ENCODE measurements at regions of chr11 and their contacts with region 1.

Region 1: GRCh38 chr11:75445315-75445953 is 12.4 kb upstream of the KLHL35 start:
- DNase-seq: peak; percentile 76
- H3K4me3 ChIP-seq: no peak overlapping the region
- H3K27ac ChIP-seq: no peak overlapping the region
- H3K4me1 ChIP-seq: no peaks in the 10 kb centered on the region
- H3K27me3 ChIP-seq: no peaks in the 10 kb centered on the region
- CTCF ChIP-seq: peak; percentile 97

Region 2: DNA sequence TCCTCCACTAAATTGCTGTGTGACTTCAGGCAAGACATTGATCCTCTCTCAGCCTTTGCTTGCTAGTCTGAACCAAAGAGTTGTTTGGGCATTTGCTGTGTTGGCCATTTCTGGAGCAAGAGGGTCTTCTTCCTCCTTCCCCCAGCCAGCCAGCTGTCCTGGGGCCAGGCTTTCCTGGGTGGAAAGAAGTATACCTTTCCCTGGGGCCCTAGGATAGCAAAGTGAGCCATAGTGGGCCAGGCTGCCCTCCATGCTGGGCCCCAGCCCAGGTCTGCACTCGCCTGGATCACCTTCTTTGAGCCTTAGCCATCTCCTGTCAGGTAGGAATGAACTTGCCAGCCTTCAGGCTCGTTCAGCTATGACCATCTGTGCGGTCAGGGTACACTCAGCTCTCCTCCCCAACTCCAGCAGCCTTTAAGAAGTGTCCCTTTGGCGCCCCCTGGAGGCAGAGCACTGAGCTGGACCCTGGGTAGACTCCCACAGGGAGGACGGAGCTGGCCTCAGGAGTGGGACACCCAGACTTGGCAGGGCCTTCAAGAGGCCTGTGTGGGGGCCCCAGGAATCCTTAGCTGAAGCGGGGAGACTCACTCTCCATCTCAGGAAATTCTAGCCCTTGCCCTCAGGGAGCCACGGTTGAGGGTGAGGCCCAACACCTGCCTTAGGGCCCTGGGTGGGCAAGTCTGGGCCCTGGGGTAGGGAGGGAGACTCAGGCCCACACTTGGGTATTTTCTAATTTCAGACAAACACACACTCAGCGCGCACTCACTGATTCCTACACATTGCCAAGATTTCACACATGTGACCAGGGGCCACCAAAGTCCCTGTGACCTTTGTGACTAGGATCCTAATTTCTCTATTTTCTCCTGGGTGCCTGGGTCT is 240.5 kb before region 1 on chr11:
- intact Hi-C with region 1: no loop called
- DNase-seq: peak; percentile 93
- H3K4me3 ChIP-seq: no peak overlapping the region
- H3K27ac ChIP-seq: no peak overlapping the region
- H3K4me1 ChIP-seq: no peaks in the 10 kb centered on the region
- H3K27me3 ChIP-seq: no peaks in the 10 kb centered on the region
- CTCF ChIP-seq: peak; percentile 92

Region 3: DNA sequence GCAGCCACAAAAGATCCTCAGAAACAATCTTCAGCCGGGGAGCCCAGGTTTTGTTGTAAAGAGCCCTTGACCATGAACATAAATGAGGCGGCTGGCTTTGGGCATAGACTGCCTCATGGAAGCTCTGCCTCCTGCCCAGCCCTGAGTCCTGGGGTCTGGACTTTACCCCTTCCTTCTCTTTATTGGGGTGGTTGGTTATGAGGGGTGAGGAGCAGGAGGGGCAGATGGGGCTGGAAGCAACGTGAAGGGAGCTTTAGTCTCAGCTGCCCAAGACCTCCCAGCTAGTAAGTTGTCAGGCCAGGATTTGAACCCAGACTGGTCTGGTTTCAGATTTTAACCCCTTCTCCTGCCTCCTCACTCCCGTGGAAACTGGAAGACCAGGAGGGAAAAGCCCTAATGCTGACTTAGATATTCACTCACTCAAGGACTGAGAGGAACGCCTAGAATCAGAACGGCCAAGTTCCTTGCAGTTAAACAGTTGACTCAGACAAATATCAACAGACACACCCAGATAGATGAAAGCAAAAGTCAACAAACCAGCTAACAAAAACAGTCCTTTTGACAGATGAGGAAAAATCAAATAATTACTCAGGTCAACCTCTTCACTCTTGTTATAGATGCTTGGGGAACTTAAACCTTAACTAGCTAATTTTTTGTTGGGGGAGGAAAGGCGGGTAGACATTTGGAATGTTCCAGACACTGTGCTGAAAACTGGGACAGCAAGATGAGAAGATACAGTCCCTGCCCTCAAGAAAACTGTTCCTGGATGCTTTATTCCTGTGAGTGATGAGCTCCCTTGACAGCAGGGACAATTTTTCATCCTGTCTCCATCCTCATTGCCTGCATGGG is 73.3 kb before region 1 on chr11:
- intact Hi-C with region 1: no loop called
- DNase-seq: peak; percentile 75
- H3K4me3 ChIP-seq: no peak overlapping the region
- H3K27ac ChIP-seq: peak overlapping the region; percentile 93
- H3K4me1 ChIP-seq: no peaks in the 10 kb centered on the region
- H3K27me3 ChIP-seq: no peaks in the 10 kb centered on the region
- CTCF ChIP-seq: no peak

Region 4: GRCh38 chr11:75399344-75400145 is 45.9 kb before region 1 on chr11 and contains the start of gene RPS3:
- intact Hi-C with region 1: loop called (anchors 10 kb)
- DNase-seq: peak; percentile 92
- H3K4me3 ChIP-seq: peak within 1 kb of the TSS; percentile 68
- H3K27ac ChIP-seq: peak within 1 kb of the TSS; percentile 90
- H3K4me1 ChIP-seq: peaks cover 6% of the 10 kb centered on the region
- H3K27me3 ChIP-seq: no peaks in the 10 kb centered on the region
- CTCF ChIP-seq: no peak
- total RNA-seq, gene RPS3: 2,133 to 2,596 TPM

Region 5: DNA sequence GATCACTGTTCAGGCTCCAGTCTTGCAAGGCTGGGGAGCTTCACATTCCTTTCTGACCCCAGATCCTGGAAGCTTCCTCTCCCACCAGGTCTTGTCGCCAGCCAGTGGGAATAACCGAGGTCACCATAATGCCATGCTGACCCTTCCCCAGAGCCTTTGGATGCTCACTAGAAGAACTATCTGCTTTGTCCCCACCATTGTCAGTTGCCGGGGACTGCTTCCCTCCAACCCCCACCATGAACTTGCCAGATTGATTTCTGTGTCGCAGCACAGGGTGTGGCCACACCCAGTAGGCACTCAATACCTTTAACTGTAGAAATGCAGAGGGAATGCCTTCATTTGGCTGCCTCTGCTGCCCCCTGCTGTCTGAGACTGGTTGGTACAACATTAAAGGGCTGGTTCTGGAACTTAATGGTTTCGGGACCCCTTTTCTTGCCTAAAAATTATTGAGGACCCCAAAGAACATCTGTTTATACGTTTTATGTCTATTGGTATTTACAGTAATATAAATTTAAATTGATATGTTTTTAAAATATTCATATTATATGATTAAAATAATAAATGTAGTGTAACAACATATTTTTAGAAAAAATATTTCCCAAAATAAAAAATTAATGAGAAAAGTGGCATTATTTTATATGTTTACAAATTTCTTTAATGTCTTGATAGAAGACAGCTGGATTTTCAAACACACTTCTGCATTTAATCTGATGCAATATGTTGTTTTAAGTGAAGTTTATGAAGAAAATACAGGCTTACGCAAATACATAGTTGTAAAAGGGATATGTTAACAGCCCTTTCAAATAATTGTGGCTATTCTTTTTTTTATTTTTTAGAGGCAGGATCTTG is 87.0 kb after region 1 on chr11:
- intact Hi-C with region 1: loop called (anchors 1 kb)
- DNase-seq: peak; percentile 85
- H3K4me3 ChIP-seq: no peak overlapping the region
- H3K27ac ChIP-seq: no peak overlapping the region
- H3K4me1 ChIP-seq: peaks cover 2% of the 10 kb centered on the region
- H3K27me3 ChIP-seq: no peaks in the 10 kb centered on the region
- CTCF ChIP-seq: peak; percentile 91